ENCODE measurements at regions of chrX and their contacts with region 1.

Region 1: DNA sequence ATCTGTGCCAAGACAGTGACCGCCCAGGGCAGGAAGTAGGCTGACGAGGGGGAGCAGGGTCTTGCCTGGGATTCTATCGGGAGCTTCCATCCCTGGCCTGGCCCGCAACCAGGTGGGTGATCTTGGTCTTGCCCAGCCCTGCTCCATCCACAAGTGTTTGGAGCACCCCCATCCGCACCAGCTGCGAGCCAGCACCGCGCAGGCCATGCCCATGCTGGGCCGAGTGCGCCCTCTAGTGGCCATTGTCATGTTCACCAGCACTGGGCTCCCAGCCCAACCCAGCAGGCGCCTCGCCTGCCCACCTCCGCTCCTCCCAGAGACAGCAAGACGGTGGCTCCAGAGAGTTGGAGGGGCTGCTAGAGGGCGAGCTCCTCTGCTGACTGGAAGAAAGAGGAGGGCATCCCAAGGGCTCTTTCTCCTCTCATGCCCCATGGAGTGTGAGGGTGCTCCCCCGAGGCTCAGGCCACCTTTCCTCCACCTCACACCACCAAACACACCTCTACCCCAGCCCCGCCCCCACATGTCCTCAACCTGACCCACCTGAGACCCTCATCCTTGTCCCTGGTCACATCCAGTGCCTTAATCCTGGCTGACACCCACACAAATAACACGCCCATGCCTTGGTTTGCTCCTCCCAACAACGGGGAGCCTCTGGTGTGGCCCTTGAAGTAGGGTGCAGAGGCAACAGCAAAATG is 9.8 kb upstream of the ATP2B3 start:
- DNase-seq: peak; percentile 90

Region 2: DNA sequence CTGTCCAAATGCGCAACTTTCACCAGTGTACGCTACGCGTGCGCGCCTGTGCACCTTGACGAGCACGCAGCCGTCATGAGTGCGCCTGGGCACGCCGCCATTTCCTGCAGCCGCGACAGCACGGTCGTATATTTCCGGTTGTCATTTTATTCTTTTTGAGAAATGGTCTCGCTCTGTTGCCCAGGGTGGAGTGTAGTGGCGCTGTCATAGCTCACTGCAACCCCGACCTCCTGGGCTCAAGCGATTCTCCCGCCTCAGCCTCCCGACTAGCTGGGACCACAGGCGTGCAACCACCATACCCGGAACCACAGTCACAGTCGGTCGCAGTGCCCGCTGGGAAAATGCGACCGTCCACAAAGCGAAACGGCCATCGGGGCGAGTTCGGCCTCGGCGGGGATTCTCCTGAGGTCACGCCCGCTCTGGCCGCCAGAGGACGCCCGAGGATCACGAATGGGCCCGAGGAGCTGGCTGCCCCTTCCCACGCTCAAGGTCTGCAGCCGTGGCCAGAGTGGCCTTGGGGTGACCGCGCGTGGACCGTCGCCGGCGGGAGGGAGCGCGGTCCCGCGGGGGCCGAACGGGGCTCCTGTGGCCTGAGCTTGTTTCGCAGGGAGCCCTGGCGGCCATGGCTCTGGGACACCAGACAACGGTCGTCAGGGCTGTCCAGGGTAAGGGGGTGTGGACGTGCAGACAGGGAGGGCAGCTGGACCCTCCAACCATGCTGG is 475.1 kb before region 1 on chrX:
- intact Hi-C with region 1: loop called (anchors 5 kb)
- DNase-seq: peak; percentile 89

Region 3: DNA sequence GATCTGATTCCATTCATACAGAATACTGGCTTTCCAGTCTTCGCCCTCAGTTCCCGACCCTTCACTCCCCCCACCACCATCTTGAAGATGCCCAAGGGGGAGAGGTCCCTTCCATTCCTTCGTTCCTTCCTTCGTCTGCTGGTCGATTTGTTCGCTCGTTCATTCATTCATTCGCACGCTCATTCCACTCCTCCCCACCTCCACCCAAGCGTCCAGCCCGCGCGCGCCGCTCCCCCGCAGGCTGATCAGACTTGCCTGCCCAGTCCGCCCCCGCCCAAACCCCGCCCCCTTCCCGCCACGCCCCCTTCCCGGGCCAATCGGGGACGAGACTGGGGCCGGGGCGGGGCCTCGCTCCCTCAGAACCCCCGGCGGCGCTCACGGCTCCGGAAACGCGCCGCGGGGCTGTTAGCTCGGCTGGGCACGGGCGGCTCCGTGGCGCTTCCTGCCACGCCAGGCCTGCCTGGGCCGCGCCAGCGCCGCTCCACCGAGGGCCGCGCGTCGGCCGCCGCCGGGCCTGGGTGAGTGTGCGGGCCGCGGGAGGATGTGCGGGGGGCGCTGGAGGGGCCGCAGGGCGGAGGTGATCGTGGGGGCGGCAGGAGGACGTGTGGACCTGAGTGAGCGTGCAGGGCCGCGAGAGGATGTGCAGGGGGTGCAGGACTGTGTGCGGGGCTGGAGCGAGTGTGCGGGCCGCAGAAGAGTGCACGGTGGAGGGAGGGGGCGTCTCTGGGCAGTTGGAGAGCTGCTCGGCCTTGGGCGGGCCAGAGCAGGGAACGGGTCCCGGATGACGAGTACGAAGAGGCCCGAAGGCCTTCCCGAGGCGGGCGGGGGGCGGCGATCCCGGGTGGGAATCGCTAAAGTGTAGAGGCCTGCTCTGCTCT is 173.6 kb before region 1 on chrX and contains the start of gene ZNF275:
- intact Hi-C with region 1: no loop called
- DNase-seq: peak; percentile 89
- total RNA-seq, gene ZNF275: 6.1 TPM

Region 4: DNA sequence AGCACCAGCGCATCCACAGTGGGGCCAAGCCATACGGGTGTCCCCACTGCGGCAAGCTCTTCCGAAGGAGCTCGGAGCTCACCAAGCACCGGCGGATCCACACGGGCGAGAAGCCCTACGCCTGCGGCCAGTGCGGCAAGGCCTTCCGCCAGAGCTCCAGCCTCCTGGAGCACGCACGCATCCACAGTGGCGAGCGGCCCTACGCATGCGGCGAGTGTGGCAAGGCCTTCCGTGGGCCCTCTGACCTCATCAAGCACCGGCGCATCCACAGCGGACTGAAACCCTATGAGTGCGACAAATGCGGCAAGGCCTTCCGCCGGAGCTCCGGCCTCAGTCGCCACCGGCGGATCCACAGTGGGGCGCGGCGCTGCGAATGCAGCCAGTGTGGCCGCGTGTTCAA is 160.1 kb before region 1 on chrX:
- intact Hi-C with region 1: no loop called
- DNase-seq: no peak

Region 5: DNA sequence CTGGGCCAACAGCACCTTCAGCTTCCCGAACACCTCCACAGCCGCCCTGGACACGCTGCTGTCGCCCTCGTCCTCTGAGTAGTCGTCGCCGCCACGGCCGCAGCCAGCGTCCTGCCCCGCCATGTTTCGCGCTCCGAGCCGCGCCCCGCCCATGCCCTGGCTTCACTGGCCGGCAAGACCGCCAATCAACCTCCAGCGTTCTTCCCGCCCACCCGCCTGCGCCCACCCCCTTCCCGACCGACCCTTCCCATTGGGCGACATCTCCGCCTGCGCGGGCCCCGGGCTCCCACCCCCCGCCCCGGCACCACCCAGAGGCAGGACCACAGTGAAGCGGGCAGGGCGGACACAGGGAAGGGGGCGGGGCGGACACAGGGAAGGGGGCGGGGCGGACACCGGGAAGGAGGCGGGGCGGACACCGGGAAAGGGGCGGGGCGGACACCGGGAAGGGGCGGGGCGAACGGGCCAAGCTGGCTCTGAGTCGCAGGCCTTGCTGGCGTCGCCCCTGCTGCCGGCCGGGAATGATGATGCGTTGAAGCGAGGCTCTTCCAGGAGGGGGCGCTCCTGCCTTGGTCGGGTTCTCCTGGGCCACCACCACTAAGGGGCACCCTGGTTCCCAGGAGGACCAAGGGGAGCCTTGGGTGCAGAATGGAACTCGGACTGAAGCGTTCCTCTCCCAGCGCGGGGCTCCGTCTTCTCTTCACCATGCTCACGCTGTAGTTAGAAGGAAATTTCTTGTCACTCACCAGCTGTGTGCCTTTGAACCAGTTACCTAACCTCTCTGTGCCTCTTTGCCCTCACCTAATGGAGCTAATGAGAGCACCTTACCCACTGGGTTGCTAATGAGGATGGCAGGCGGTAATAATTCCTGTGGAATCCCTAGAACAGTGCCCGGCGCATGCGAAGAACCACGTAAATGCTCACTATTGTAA is 36.9 kb before region 1 on chrX and contains the start of gene HAUS7:
- intact Hi-C with region 1: loop called (anchors 5 kb)
- DNase-seq: peak; percentile 94
- total RNA-seq, gene HAUS7: 13.4 TPM

Region 6: DNA sequence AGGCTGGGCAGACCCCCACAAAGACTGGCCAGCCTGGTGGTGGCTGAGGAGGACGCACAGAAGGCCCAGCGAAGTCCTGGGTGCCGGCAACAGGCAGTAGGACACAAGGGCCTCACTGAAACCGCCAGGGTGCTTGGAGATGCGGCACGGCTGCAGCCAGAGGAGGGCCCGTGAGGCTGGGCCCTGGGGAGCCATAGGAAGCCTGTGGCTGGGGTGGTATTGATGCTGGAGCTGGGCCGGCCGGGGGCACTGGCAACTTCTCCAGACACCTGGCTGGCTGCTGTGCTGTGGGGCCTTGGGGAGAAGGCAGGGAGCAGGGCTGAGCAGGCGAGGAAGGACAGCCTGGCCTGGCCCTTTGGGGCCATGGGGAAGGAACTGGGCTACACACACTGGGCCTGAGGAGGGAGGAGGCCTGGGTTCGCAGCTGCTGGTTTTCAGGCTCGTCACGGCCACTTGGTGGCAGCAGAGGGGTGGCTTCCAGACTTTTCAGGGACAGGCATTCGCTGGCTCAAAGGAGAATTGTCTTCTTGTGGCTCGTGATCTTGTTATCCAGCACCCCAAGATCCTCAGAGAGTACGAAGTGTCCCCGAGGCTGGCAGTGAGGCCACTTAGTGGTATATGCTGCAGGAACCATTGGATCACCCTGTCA is 47.0 kb after region 1 on chrX:
- intact Hi-C with region 1: no loop called
- DNase-seq: no peak

Measured in cardiac septum (tissue), 1 donor.